ENCODE measurements at regions of chr3 and their contacts with region 1.

Region 1: DNA sequence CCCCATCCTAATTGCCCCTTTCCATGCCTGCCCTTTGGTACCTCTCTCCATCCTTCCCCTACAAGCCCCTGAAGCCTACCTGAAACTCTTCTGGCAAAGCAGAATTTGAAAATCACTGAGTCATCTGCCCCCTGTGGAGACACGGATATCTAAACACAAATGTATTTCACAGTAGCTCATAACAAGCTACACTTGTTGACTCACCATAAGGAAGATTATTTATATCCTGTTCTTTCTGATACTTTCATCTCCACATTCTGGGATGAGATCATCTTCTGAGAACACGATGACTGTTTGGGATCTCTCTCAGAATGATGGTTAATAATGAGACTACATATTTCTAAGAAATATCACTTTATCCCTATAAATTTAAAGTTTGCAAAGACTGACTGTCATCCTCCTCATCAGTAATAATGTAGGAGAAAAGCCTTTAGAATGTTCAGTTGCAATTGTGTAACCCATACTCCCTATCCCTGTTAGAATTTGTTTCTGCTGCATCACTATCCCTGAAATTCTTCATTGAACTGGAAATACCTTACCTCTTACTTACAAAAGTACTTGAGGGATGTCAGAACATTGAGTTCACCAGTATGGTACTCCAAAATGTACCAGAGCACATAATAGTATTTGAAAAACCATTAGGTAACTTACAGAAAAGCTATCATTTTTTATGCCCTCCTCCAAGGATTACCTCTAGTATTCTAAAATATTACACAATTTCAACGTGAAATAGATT is 116.1 kb upstream of the IL12A start:
- DNase-seq: peak; percentile 38
- H3K4me3 Mint-ChIP-seq: no peak overlapping the region
- H3K27ac Mint-ChIP-seq: peak overlapping the region; percentile 23
- H3K4me1 Mint-ChIP-seq: peaks cover 10% of the 10 kb centered on the region
- H3K27me3 Mint-ChIP-seq: no peaks in the 10 kb centered on the region
- CTCF ChIP-seq: peak; percentile 34

Region 2: GRCh38 chr3:159804726-159805410 is 67.7 kb before region 1 on chr3:
- CTCF ChIA-PET with region 1: no interaction called
- intact Hi-C with region 1: no loop called
- DNase-seq: peak; percentile 84
- H3K4me3 Mint-ChIP-seq: no peak overlapping the region
- H3K27ac Mint-ChIP-seq: no peak overlapping the region
- H3K4me1 Mint-ChIP-seq: peaks cover 37% of the 10 kb centered on the region
- H3K27me3 Mint-ChIP-seq: no peaks in the 10 kb centered on the region
- CTCF ChIP-seq: peak; percentile 97

Region 3: GRCh38 chr3:159828542-159828943 is 44.0 kb before region 1 on chr3:
- CTCF ChIA-PET with region 1: no interaction called
- intact Hi-C with region 1: loop called (anchors 5 kb)
- DNase-seq: no peak
- H3K4me3 Mint-ChIP-seq: no peak overlapping the region
- H3K27ac Mint-ChIP-seq: no peak overlapping the region
- H3K4me1 Mint-ChIP-seq: peaks cover 26% of the 10 kb centered on the region
- H3K27me3 Mint-ChIP-seq: no peaks in the 10 kb centered on the region
- CTCF ChIP-seq: peak; percentile 59